Common myeloid progenitor, CD34-positive (primary cell): ENCODE measurements at regions of chr9 and their contacts with region 1.

Region 1: DNA sequence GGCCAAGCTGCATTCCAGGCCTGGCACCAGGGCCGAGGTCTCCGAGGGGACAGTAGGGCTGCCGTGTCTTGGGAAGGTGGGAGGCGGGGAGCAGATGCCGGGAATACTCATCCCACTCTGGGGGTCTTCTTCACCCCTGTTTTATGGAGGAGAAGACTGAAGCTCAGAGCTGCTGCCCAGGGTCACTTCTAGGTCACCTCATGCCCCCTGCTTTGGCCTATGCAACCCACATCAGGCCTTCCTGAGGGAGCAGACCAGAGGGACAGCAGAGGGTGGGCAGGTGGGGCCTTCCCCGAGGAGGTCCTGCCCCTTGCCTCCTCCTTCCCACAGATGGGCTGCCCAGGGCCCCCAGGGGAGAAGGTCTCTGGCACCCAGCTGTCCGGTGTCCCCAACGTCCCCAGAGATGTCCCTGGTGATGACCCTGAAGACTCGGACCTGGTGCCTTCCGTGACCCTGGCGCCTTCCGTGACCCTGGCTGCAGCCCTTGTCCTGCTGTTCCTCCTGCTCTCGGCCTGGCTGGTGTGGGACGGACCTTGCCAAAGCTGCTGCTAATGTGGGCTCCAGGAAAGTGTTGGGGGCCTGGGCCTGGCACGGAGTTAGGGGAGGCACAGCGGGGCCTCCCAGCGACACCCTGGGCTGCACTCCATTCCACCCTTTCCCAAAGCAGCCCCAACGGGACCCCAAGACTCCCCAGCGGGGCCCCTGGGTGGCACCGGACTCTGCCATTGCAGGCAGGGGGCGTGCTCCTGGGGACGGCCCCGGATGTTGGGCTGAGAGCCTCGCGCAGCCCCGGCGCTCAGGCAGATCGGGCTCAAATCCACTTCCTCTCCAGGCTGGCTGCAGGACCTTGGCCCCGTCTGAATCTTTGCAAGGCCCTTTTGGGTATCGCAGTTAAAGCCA is 6.7 kb upstream of the SLC2A6 start:
- DNase-seq: peak in 2 of 3 donors; percentile 42 to 58
- H3K4me3 ChIP-seq: peak overlapping the region in 4 of 7 experiments; percentile 33 to 58 (median 40)
- H3K27ac ChIP-seq: no peak overlapping the region
- H3K4me1 ChIP-seq: peaks cover 0 to 18% (median 14%) of the 10 kb centered on the region in 4 experiments
- H3K27me3 ChIP-seq: no peaks in the 10 kb centered on the region

Region 2: DNA sequence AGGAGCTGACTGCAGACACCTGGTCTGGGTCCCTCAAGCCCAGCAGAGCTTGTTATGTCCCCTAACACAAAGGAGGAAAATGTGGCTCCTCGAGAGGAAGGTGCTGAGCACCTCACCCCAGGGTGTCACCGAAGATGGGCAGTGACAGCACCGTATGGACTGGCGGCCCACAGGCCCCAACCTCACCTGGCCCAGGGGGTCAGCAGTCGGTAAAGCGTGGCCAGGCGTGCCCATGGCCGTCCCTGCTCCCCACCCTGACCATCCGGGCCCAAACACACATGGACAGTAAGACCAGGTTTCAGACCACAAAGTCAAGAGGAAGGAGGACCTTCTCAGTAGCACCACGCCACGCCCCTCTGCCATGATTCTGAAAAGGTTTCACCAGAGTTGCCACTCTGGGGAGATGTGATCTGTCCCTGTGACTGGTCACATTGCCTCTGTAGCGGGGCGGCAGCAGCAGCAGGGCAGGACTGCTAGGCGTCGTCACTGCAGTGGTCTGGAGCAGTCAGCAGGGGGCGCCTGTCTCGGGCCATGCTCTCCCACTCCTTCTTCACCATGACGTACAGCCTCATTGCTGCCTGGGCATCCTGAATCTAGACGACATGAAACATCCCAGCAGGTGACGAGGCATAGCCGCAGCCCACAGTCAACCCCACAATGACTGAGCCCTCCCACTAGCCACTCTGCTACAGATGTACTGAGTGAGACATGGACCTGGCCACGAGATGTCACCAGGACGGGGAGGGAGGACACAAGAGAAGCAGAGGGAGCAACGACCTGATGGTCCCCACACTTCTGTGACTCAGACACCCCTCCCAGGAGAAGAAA is 78.9 kb before region 1 on chr9:
- CTCF ChIA-PET with region 1: interaction called, 52 read pairs
- POLR2A ChIA-PET with region 1: no interaction called
- DNase-seq: peak; percentile 78 to 88 (median 87)
- H3K4me3 ChIP-seq: no peak overlapping the region
- H3K27ac ChIP-seq: no peak overlapping the region
- H3K4me1 ChIP-seq: no peaks in the 10 kb centered on the region
- H3K27me3 ChIP-seq: no peaks in the 10 kb centered on the region

Region 3: GRCh38 chr9:133456409-133456808 is 29.2 kb before region 1 on chr9:
- CTCF ChIA-PET with region 1: interaction called, 11 read pairs
- POLR2A ChIA-PET with region 1: no interaction called
- DNase-seq: no peak
- H3K4me3 ChIP-seq: no peak overlapping the region
- H3K27ac ChIP-seq: no peak overlapping the region
- H3K4me1 ChIP-seq: peaks cover 3 to 18% (median 17%) of the 10 kb centered on the region in 4 experiments
- H3K27me3 ChIP-seq: no peaks in the 10 kb centered on the region

Region 4: GRCh38 chr9:133467101-133467500 is 18.5 kb before region 1 on chr9:
- CTCF ChIA-PET with region 1: no interaction called
- POLR2A ChIA-PET with region 1: no interaction called
- DNase-seq: no peak
- H3K4me3 ChIP-seq: no peak overlapping the region
- H3K27ac ChIP-seq: no peak overlapping the region
- H3K4me1 ChIP-seq: peaks cover 0 to 14% (median 5%) of the 10 kb centered on the region in 4 experiments
- H3K27me3 ChIP-seq: no peaks in the 10 kb centered on the region